OCI-LY7 (cell line): ENCODE measurements at regions of chr10 and their contacts with region 1.

Region 1: DNA sequence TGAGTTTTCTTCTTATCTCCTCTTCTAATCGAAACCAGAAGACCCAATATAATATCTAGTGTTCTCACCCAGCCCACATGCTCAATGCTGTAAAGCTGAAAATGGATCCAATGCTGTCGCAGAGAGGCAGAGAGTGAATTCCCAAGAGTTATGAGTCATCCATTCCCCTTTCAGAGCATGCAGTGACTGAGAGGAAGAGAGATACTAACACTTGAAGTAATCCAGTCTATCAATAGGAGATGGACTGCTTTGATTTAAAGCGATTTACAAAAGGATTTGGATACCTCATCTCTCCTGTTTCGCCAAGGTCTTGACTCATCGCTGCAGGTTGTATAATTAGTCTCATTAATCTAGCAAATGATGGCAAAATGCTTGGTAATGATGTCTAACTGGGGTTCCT is 41.5 kb upstream of the PRKCQ start:
- DNase-seq: no peak
- H3K4me3 ChIP-seq: no peak overlapping the region
- H3K27ac ChIP-seq: no peak overlapping the region
- H3K4me1 ChIP-seq: no peaks in the 10 kb centered on the region
- CTCF ChIP-seq: no peak

Region 2: GRCh38 chr10:6337382-6337781 is 284.2 kb before region 1 on chr10:
- CTCF ChIA-PET with region 1: no interaction called
- POLR2A ChIA-PET with region 1: no interaction called
- intact Hi-C with region 1: no loop called
- DNase-seq: no peak
- H3K4me3 ChIP-seq: no peak overlapping the region
- H3K27ac ChIP-seq: no peak overlapping the region
- H3K4me1 ChIP-seq: peaks cover 5% of the 10 kb centered on the region
- CTCF ChIP-seq: no peak

Region 3: GRCh38 chr10:6640433-6641040 is 19.0 kb after region 1 on chr10:
- CTCF ChIA-PET with region 1: no interaction called
- POLR2A ChIA-PET with region 1: no interaction called
- intact Hi-C with region 1: loop called (anchors 1 kb)
- DNase-seq: no peak
- H3K4me3 ChIP-seq: no peak overlapping the region
- H3K27ac ChIP-seq: no peak overlapping the region
- H3K4me1 ChIP-seq: no peaks in the 10 kb centered on the region
- CTCF ChIP-seq: no peak